ENCODE measurements at regions of chr19 and their contacts with region 1.

Region 1: DNA sequence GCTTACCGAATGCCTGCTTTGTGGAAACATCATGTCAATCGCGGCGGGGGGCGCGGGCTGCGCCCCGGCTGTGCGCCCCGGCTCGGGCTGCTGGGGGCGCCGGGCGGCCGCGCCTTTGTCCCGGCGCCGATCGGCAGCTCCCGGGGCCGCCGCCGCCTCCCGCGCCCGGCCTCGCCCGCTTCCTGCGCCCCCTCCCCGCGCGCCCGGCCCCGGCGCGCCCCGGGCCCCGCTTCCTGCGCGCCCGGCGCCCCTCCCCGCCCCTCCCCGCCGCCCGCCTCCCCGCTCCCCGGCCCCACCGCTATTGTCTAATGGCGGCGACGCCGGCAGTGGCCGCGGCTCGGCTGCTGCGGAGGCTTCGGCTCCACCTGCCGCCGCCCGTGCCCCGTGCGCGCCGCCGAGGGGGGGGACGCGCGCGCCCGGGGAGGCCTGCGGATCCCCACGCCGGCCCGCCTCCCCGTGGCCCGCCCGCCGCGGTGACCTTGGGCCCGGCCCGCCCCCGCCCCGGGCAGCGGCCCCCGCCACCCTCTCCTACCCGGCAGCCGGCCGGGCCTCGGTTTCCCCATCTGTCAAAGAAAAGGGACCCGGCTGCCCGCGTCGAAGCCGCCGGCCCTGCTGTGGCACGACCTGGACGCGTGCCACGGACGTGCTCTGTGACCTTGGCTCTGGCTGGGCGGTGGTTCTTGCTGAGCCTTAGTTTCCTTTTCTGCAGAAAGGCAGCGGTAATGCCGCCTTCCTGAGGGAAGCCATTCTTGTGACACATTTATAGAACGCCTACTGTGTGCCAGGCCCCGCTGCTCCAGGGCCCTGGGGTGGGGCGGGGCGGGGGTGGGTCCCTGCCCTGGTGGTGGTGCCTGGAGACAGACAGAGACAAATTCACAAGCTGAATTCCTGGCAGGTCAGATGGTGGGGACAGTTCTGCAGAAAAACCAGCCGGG is at the start of gene TLE5:
- DNase-seq: peak; percentile 77 to 82 (median 79)
- H3K4me3 ChIP-seq: peak within 1 kb of the TSS in 1 of 2 donors; percentile 65
- H3K4me3 Mint-ChIP-seq: peak within 1 kb of the TSS; percentile 87 to 95 (median 90)
- H3K27ac ChIP-seq: peak within 1 kb of the TSS; percentile 62
- H3K27ac Mint-ChIP-seq: peak within 1 kb of the TSS; percentile 93 to 97 (median 96)
- H3K4me1 ChIP-seq: peaks cover 55% of the 10 kb centered on the region
- H3K4me1 Mint-ChIP-seq: peaks cover 16 to 51% (median 35%) of the 10 kb centered on the region in 4 donors
- H3K27me3 ChIP-seq: no peaks in the 10 kb centered on the region
- H3K27me3 Mint-ChIP-seq: no peaks in the 10 kb centered on the region
- total RNA-seq, gene TLE5: 876 to 900 TPM

Region 2: DNA sequence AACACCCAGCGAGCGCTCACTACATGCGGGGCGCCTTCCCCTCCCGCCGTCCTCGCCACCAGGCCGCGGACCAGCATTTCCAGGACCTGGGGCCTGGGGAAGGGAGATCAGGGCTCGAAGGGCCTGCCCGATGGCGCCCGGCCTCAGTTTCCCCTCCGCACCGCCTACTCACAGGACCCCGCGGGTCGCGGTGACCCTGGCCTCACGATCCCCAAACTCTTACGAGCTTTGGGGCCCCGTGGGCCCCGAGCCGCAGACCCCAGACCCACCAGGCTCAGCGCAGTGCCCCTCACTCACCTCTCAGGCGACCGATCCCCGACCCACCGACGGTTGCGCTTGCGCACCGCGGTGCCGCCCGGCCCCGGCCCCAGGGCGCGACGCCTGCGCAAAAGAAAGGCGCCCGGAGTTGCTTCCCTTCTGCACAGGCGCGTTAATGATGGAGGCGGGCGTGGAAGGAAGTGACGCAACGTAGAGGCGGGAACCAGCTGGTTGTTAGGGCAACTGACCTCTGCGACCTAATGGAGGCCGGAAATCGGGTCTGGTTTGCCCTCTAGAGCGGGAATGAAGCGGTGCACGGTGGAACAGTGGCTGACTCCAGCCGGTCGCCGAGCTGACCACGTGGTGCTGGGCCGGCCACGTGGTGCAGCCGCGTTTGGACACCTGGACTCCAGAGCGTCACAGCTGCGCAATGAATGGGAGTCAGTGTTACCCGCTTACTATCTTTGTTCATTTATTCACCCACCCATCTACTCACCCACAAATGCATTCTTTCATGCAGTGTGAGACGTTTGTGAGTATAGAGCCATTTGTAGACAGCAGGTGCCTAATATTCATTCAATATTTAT is 279.3 kb before region 1 on chr19 and contains the start of gene SGTA:
- CTCF ChIA-PET with region 1: no interaction called
- POLR2A ChIA-PET with region 1: no interaction called
- intact Hi-C with region 1: loop called (anchors 2 kb)
- DNase-seq: peak; percentile 94 to 98 (median 97)
- H3K4me3 ChIP-seq: peak within 1 kb of the TSS; percentile 85 to 91
- H3K4me3 Mint-ChIP-seq: peak within 1 kb of the TSS; percentile 84 to 93 (median 90)
- H3K27ac ChIP-seq: peak within 1 kb of the TSS; percentile 93
- H3K27ac Mint-ChIP-seq: peak within 1 kb of the TSS; percentile 87 to 97 (median 96)
- H3K4me1 ChIP-seq: peaks cover 54% of the 10 kb centered on the region
- H3K4me1 Mint-ChIP-seq: peaks cover 26 to 69% (median 47%) of the 10 kb centered on the region in 4 donors
- H3K27me3 ChIP-seq: no peaks in the 10 kb centered on the region
- H3K27me3 Mint-ChIP-seq: no peaks in the 10 kb centered on the region
- total RNA-seq, gene SGTA: 37.0 to 37.8 TPM

Region 3: GRCh38 chr19:2977001-2977685 is 85.3 kb before region 1 on chr19 and contains the start of gene TLE6:
- CTCF ChIA-PET with region 1: no interaction called
- POLR2A ChIA-PET with region 1: interaction called, 16 read pairs
- intact Hi-C with region 1: no loop called
- DNase-seq: peak; percentile 92 to 94 (median 93)
- H3K4me3 ChIP-seq: peak within 1 kb of the TSS; percentile 54 to 90
- H3K4me3 Mint-ChIP-seq: peak within 1 kb of the TSS; percentile 90 to 99 (median 94)
- H3K27ac ChIP-seq: peak within 1 kb of the TSS; percentile 17
- H3K27ac Mint-ChIP-seq: peak within 1 kb of the TSS; percentile 68 to 97 (median 90)
- H3K4me1 ChIP-seq: peaks cover 13% of the 10 kb centered on the region
- H3K4me1 Mint-ChIP-seq: peaks cover 6 to 19% (median 14%) of the 10 kb centered on the region in 4 donors
- H3K27me3 ChIP-seq: no peaks in the 10 kb centered on the region
- H3K27me3 Mint-ChIP-seq: peaks cover 0 to 6% of the 10 kb centered on the region in 2 donors
- total RNA-seq, gene TLE6: not detected

Region 4: GRCh38 chr19:3029065-3029923 is 33.1 kb before region 1 on chr19 and contains the start of gene TLE2:
- CTCF ChIA-PET with region 1: no interaction called
- POLR2A ChIA-PET with region 1: interaction called, 555 read pairs
- intact Hi-C with region 1: no loop called
- DNase-seq: peak in 2 of 5 donors; percentile 20 to 35
- H3K4me3 ChIP-seq: peak within 1 kb of the TSS in 1 of 2 donors; percentile 41
- H3K4me3 Mint-ChIP-seq: peak within 1 kb of the TSS; percentile 72 to 85 (median 80)
- H3K27ac ChIP-seq: no peak within 1 kb of the TSS
- H3K27ac Mint-ChIP-seq: peak within 1 kb of the TSS in 6 of 7 donors; percentile 30 to 85 (median 36)
- H3K4me1 ChIP-seq: peaks cover 24% of the 10 kb centered on the region
- H3K4me1 Mint-ChIP-seq: peaks cover 9 to 38% (median 25%) of the 10 kb centered on the region in 4 donors
- H3K27me3 ChIP-seq: no peaks in the 10 kb centered on the region
- H3K27me3 Mint-ChIP-seq: no peaks in the 10 kb centered on the region
- total RNA-seq, gene TLE2: 20.9 to 23.1 TPM

Region 5: GRCh38 chr19:3047425-3048189 is 14.8 kb before region 1 on chr19:
- CTCF ChIA-PET with region 1: interaction called, 8 read pairs
- POLR2A ChIA-PET with region 1: interaction called, 555 read pairs
- intact Hi-C with region 1: loop called (anchors 1 kb)
- DNase-seq: peak; percentile 66 to 83 (median 67)
- H3K4me3 ChIP-seq: peak overlapping the region; percentile 17 to 40
- H3K4me3 Mint-ChIP-seq: peak overlapping the region; percentile 91 to 98 (median 94)
- H3K27ac ChIP-seq: peak overlapping the region; percentile 21
- H3K27ac Mint-ChIP-seq: peak overlapping the region; percentile 84 to 95 (median 94)
- H3K4me1 ChIP-seq: peaks cover 14% of the 10 kb centered on the region
- H3K4me1 Mint-ChIP-seq: peaks cover 10 to 23% (median 14%) of the 10 kb centered on the region in 4 donors
- H3K27me3 ChIP-seq: no peaks in the 10 kb centered on the region
- H3K27me3 Mint-ChIP-seq: no peaks in the 10 kb centered on the region

Region 6: DNA sequence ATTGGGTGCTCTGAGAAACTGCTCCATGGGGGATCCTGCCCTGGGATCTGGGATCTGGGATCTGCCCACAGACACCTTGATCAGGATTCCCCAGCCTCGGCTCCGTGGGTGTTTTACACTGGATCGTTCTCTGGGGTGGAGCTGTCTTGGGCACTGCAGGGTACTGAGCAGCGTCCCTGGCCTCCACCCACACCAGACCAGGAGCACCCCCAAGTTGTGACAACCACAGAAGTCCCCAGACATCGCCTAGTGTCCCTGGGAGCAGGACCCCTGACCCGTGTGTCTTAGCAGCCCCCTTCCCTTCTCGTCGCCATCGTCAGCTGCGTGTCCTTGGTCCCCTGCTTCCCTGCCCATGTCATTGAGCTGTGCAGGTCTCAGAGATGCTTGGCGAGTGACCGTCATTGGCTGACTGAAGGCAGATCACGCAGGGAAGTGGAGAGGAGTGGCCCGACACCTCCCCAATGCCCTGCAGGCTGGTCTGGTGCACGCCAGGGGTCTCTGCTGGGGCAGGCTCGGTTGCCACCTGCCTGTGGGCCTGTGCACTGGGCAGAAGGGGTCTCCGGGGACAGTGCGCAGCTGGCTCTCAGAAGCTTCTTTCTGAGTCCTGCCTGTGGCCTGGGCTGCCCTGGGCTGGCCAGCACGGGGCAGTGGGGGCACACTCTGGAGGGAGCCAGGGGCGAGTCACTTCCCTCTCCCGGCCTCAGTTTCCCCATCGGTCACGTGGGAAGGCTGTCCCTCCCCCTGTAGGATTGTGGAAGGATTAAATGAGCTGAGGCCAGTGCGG is 37.8 kb after region 1 on chr19:
- CTCF ChIA-PET with region 1: interaction called, 3 read pairs
- POLR2A ChIA-PET with region 1: interaction called, 4 read pairs
- intact Hi-C with region 1: loop called (anchors 5 kb)
- DNase-seq: no peak
- H3K4me3 ChIP-seq: no peak overlapping the region
- H3K4me3 Mint-ChIP-seq: peak overlapping the region in 2 of 8 donors; percentile 20 to 86
- H3K27ac ChIP-seq: no peak overlapping the region
- H3K27ac Mint-ChIP-seq: no peak overlapping the region
- H3K4me1 ChIP-seq: peaks cover 37% of the 10 kb centered on the region
- H3K4me1 Mint-ChIP-seq: peaks cover 16 to 34% (median 25%) of the 10 kb centered on the region in 4 donors
- H3K27me3 ChIP-seq: peaks cover 3% of the 10 kb centered on the region
- H3K27me3 Mint-ChIP-seq: peaks cover 5 to 17% of the 10 kb centered on the region in 2 donors

Region 7: GRCh38 chr19:3185482-3186376 is 123.3 kb after region 1 on chr19 and contains the start of gene NCLN:
- CTCF ChIA-PET with region 1: no interaction called
- POLR2A ChIA-PET with region 1: interaction called, 24 read pairs
- intact Hi-C with region 1: loop called (anchors 1 kb)
- DNase-seq: peak; percentile 95 to 98 (median 95)
- H3K4me3 ChIP-seq: peak within 1 kb of the TSS; percentile 78 to 88
- H3K4me3 Mint-ChIP-seq: peak within 1 kb of the TSS; percentile 87 to 97 (median 93)
- H3K27ac ChIP-seq: peak within 1 kb of the TSS; percentile 45
- H3K27ac Mint-ChIP-seq: peak within 1 kb of the TSS; percentile 93 to 97 (median 96)
- H3K4me1 ChIP-seq: peaks cover 70% of the 10 kb centered on the region
- H3K4me1 Mint-ChIP-seq: peaks cover 33 to 67% (median 50%) of the 10 kb centered on the region in 4 donors
- H3K27me3 ChIP-seq: no peaks in the 10 kb centered on the region
- H3K27me3 Mint-ChIP-seq: no peaks in the 10 kb centered on the region
- total RNA-seq, gene NCLN: 53.0 to 59.3 TPM